Calu3 (cell line): ENCODE measurements at regions of chr16 and their contacts with region 1.

Region 1: DNA sequence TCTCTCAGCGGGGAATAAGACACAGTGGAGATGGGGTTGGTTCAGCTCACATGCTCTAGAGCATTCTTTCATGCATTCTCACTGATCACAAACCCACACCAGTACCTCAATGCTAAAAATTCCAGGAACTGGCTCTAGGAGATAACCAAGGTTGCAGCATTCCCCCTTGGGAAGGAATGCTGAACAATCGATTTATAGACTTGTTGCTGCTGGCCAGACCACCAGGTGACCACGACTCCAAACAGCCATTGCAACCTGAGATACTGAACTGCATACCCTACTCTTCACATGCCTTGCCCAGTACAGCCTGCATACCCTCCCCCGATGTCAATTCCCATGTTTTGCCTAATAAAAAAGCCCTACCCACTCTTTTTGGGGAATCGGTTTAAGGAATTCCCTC is 75.1 kb upstream of the GPRC5B start:
- DNase-seq: no peak
- H3K4me3 Mint-ChIP-seq: no peak overlapping the region
- H3K27ac Mint-ChIP-seq: no peak overlapping the region
- H3K4me1 Mint-ChIP-seq: no peaks in the 10 kb centered on the region
- H3K27me3 Mint-ChIP-seq: peaks cover 64% of the 10 kb centered on the region
- CTCF ChIP-seq: no peak

Region 2: GRCh38 chr16:19933740-19934139 is 26.0 kb before region 1 on chr16:
- CTCF ChIA-PET with region 1: interaction called, 11 read pairs
- intact Hi-C with region 1: no loop called
- DNase-seq: no peak
- H3K4me3 Mint-ChIP-seq: no peak overlapping the region
- H3K27ac Mint-ChIP-seq: no peak overlapping the region
- H3K4me1 Mint-ChIP-seq: no peaks in the 10 kb centered on the region
- H3K27me3 Mint-ChIP-seq: peaks cover 44% of the 10 kb centered on the region
- CTCF ChIP-seq: no peak

Region 3: GRCh38 chr16:19974607-19975006 is 14.9 kb after region 1 on chr16:
- CTCF ChIA-PET with region 1: no interaction called
- intact Hi-C with region 1: no loop called
- DNase-seq: no peak
- H3K4me3 Mint-ChIP-seq: no peak overlapping the region
- H3K27ac Mint-ChIP-seq: no peak overlapping the region
- H3K4me1 Mint-ChIP-seq: no peaks in the 10 kb centered on the region
- H3K27me3 Mint-ChIP-seq: peaks cover 88% of the 10 kb centered on the region
- CTCF ChIP-seq: no peak

Region 4: GRCh38 chr16:20393801-20394577 is 434.3 kb after region 1 on chr16:
- CTCF ChIA-PET with region 1: no interaction called
- intact Hi-C with region 1: no loop called
- DNase-seq: no peak
- H3K4me3 Mint-ChIP-seq: no peak overlapping the region
- H3K27ac Mint-ChIP-seq: no peak overlapping the region
- H3K4me1 Mint-ChIP-seq: no peaks in the 10 kb centered on the region
- H3K27me3 Mint-ChIP-seq: peaks cover 11% of the 10 kb centered on the region
- CTCF ChIP-seq: no peak